Dendritic cell treated with granulocyte-macrophage colony-stimulating factor and Interleukin-4, amounts not matched to agents 40 ng/mL and 50 ng/mL, for 4 days (primary cell): ENCODE measurements at regions of chr3 and their contacts with region 1.

Region 1: DNA sequence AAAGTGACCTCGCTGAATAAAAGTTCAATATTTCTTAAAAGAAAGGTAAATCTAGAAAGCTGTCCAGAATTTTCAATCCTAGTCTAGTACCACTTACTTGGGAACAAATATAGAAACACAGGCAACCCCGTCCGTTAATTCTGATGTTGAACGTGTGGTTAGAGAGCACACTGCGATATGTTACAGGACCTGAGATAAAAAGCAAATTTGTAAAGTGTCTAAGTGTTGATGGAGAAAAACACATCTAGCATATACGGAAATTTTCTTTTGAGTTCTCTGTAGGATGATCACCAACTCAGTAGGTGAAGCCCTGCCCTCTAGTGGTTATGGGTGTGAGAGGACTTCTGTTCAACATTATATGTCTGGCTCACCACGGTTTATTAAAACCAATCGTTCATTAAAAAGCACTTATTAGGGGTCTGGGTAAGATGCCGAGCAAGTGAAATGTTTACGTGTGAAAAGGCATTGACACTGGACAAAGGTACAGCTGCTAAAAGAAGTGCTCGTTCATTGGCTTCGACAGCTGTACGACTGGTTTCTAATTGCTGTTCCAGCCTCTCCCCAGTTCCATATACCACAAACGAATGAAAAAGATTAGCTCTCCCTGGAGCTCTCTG is 1.0 kb upstream of the ATP2C1 start:
- H3K4me3 Mint-ChIP-seq: peak overlapping the region; percentile 89
- H3K27ac Mint-ChIP-seq: peak overlapping the region; percentile 99
- H3K4me1 Mint-ChIP-seq: peaks cover 19% of the 10 kb centered on the region
- H3K27me3 Mint-ChIP-seq: no peaks in the 10 kb centered on the region

Region 2: GRCh38 chr3:130746246-130747039 is 146.4 kb before region 1 on chr3 and contains the start of gene PIK3R4:
- intact Hi-C with region 1: loop called (anchors 2 kb)
- H3K4me3 Mint-ChIP-seq: peak within 1 kb of the TSS; percentile 84
- H3K27ac Mint-ChIP-seq: peak within 1 kb of the TSS; percentile 97
- H3K4me1 Mint-ChIP-seq: peaks cover 41% of the 10 kb centered on the region
- H3K27me3 Mint-ChIP-seq: no peaks in the 10 kb centered on the region

Region 3: GRCh38 chr3:130759699-130760338 is 133.0 kb before region 1 on chr3:
- intact Hi-C with region 1: loop called (anchors 1 kb)
- H3K4me3 Mint-ChIP-seq: no peak overlapping the region
- H3K27ac Mint-ChIP-seq: no peak overlapping the region
- H3K4me1 Mint-ChIP-seq: no peaks in the 10 kb centered on the region
- H3K27me3 Mint-ChIP-seq: no peaks in the 10 kb centered on the region

Region 4: DNA sequence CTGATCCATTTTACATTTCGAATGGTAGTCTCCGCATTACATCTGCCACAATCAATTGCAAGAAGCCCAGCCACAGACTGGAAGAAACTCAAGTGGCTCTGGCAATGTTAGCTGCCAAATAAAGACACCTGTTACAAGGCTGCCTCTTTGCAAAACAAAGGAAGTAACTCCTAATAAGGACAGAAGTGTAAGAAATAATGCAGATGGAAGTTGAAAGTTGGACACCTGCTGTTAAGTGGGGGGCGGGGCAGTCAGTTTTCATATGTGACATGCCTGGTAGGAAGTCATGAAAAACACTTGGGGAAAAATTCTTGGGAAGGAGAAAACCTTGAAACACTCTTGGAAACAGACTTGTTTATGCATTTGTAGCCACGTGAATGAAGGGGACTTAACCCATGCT is 53.1 kb before region 1 on chr3:
- intact Hi-C with region 1: loop called (anchors 10 kb)
- H3K4me3 Mint-ChIP-seq: no peak overlapping the region
- H3K27ac Mint-ChIP-seq: peak overlapping the region; percentile 77
- H3K4me1 Mint-ChIP-seq: peaks cover 17% of the 10 kb centered on the region
- H3K27me3 Mint-ChIP-seq: no peaks in the 10 kb centered on the region

Region 5: GRCh38 chr3:130850044-130850797 is 42.6 kb before region 1 on chr3:
- intact Hi-C with region 1: loop called (anchors 5 kb)
- H3K4me3 Mint-ChIP-seq: peak overlapping the region; percentile 66
- H3K27ac Mint-ChIP-seq: peak overlapping the region; percentile 84
- H3K4me1 Mint-ChIP-seq: peaks cover 23% of the 10 kb centered on the region
- H3K27me3 Mint-ChIP-seq: no peaks in the 10 kb centered on the region

Region 6: GRCh38 chr3:130971208-130971607 is 78.3 kb after region 1 on chr3:
- intact Hi-C with region 1: no loop called
- H3K4me3 Mint-ChIP-seq: no peak overlapping the region
- H3K27ac Mint-ChIP-seq: no peak overlapping the region
- H3K4me1 Mint-ChIP-seq: no peaks in the 10 kb centered on the region
- H3K27me3 Mint-ChIP-seq: no peaks in the 10 kb centered on the region

Region 7: DNA sequence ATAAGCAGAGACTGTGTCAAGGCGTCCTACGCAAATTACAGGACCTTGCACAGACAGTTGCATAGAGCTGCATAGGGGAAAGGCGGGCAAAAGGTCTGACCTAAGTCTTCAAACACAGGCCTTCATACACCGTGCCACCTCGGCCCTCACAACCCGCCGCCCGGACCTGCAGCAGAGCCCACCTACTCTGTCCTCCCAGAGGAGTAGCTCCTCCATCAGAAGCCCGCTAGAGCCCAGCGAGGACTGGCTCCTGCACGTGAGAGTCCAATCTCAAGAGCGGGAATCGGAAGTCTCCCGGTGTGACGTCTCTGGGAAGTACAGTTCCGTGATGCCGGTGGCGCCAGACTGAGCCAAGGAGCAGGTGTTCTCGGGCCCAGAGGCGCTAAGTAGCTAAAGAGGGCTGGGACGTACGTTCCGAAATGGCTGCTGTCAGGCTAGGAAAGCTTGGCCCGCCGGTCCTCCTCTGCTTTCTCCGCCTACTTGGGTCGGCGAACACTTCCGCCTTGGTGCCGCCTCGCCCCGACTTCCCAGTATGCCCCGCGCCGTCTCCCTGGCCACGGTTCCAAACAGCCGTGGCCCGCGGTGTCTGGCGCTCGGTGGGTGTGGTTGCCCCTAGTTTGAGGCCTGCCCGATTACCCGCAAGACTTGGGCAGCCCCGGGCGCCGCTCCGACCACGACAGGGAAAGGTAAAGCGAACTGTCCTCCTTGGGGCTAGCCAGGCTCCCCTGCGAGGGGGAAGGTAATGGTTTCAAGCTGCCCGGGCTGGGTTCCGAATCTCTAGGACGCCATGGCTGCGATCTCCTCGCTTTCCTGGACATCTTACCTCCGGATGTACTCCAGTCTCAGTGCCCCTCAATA is 133.7 kb after region 1 on chr3 and contains the starts of genes ASTE1 and NEK11:
- intact Hi-C with region 1: loop called (anchors 2 kb)
- H3K4me3 Mint-ChIP-seq: peak within 1 kb of the TSS; percentile 86
- H3K27ac Mint-ChIP-seq: peak within 1 kb of the TSS; percentile 96
- H3K4me1 Mint-ChIP-seq: peaks cover 41% of the 10 kb centered on the region
- H3K27me3 Mint-ChIP-seq: no peaks in the 10 kb centered on the region

Region 8: GRCh38 chr3:131502530-131503245 is 609.8 kb after region 1 on chr3 and contains the start of gene MRPL3:
- intact Hi-C with region 1: loop called (anchors 10 kb)
- H3K4me3 Mint-ChIP-seq: peak within 1 kb of the TSS; percentile 100
- H3K27ac Mint-ChIP-seq: peak within 1 kb of the TSS; percentile 99
- H3K4me1 Mint-ChIP-seq: peaks cover 39% of the 10 kb centered on the region
- H3K27me3 Mint-ChIP-seq: no peaks in the 10 kb centered on the region